WTC11 (cell line): ENCODE measurements at regions of chr17 and their contacts with region 1.

Region 1: DNA sequence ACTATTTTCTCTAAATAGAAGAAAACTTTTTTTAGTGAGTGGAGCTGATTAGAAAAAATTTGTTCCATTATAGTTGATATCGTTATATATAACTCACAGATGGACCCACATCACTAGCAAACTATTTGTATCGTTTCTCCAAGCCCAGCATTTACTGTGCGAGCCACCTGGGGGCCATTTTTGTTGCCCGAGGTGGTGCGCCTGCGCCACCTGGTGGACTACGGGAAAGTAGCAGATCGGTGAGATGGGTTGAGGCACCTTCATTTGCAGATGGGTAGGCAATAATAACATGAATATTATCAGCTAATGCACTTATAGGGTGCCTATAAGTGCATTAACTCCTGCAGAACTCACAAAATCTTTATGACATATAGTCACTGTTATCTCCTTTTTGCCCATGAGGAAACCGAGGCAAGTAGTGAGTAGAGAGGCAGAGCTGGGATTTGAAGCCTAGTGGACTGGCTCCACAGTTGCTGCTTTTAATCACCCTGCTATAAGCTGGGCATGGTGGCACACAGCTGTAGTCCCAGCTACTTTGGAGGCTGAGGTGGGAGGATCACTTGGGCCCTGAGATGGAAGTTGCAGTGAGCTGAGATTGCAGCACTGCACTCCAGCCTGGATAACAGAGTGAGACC is 23.2 kb upstream of the NTN1 start:
- DNase-seq: peak; percentile 79
- ATAC-seq: peak; percentile 55
- H3K4me3 Mint-ChIP-seq: no peak overlapping the region
- H3K27ac Mint-ChIP-seq: no peak overlapping the region
- H3K4me1 Mint-ChIP-seq: peaks cover 29% of the 10 kb centered on the region
- H3K27me3 Mint-ChIP-seq: peaks cover 36% of the 10 kb centered on the region
- CTCF ChIP-seq: peak; percentile 90

Region 2: GRCh38 chr17:8621585-8621984 is 376.5 kb before region 1 on chr17:
- CTCF ChIA-PET with region 1: no interaction called
- POLR2A ChIA-PET with region 1: no interaction called
- DNase-seq: no peak
- ATAC-seq: no peak
- H3K4me3 Mint-ChIP-seq: no peak overlapping the region
- H3K27ac Mint-ChIP-seq: peak overlapping the region; percentile 78
- H3K4me1 Mint-ChIP-seq: peaks cover 30% of the 10 kb centered on the region
- H3K27me3 Mint-ChIP-seq: no peaks in the 10 kb centered on the region
- CTCF ChIP-seq: no peak

Region 3: DNA sequence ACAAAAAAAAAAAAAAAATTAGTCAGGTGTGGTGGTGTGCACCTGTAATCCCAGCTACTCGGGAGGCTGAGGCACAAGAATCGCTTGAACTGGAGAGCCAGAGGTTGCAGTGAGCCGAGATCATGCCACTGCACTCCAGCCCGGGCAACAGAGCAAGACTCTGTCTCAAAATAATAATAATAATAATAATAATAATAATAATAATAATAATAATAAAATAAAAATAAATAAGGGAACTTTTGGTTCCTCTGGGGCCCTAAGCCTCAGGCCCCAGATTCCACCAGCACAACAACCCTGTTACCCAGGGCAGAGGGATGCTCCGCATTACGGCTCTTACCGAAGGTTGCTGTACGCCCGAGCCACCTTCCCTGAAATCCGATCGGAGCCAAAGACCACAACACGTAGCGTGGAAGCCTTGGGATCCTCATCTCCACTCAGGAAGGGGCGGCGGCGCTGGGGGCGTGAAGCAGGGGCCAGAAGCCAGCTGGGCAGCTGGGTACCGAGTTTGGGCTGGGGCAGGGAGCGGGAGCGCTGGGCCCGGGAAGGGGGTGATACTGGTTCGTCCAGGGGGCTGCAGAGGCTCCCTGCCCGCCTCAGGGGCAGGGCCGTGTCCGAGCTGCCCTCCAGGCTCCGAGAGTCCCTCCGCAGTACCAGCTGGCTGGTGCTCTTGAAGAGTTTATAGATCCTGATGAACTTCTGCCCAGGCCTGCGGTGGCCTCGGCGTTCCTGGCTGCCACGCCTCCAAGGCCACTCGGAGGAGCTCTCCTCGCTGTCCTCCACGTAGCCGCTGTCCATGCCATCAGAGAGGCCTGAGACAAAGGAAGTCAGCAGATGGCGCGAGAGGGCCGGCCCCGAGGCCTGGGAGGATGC is 110.0 kb before region 1 on chr17:
- CTCF ChIA-PET with region 1: interaction called, 28 read pairs
- POLR2A ChIA-PET with region 1: no interaction called
- DNase-seq: peak; percentile 89
- ATAC-seq: peak; percentile 82
- H3K4me3 Mint-ChIP-seq: no peak overlapping the region
- H3K27ac Mint-ChIP-seq: no peak overlapping the region
- H3K4me1 Mint-ChIP-seq: no peaks in the 10 kb centered on the region; the same call in 1 of the 2 replicates
- H3K27me3 Mint-ChIP-seq: no peaks in the 10 kb centered on the region; the same call in 1 of the 2 replicates
- CTCF ChIP-seq: no peak

Region 4: DNA sequence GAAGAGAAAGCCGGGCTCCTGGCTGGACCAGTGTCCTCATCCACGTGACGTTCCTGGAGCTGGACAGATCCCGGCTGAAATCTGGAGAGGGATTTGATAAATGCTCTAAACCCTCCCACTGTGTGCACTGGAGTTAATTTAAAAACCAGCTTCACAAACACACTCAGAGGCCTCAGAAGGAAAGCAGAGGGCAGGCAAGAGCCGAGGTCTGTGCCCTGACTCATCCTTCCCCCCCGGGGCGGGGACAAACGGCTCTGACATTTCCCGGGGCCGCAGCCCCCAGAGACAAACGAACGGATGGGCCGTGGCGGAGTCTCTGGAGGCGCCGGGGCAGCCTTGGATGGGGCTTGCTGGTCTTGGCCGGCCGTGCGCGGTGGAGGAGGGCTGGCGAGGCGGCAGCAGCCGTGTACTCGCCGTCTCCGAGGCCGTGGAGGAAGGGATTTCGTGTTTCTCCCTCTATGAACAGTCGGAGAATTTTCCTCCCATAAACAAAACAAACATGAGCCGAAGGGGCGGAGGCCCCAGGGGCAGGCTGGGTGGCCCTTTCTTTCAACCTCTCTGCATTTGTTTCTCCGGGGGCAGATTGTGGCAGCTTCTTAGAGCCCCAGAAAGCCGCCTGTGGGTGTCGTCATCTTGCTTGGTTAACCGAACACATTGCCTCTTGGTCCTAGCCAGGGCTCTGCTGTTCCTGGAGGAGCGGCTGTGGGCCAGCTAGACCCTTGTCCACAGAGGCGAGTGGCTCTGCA is 117.5 kb after region 1 on chr17:
- CTCF ChIA-PET with region 1: interaction called, 15 read pairs
- POLR2A ChIA-PET with region 1: no interaction called
- DNase-seq: peak; percentile 79
- ATAC-seq: peak; percentile 83
- H3K4me3 Mint-ChIP-seq: peak overlapping the region; percentile 45
- H3K27ac Mint-ChIP-seq: no peak overlapping the region
- H3K4me1 Mint-ChIP-seq: peaks cover 33% of the 10 kb centered on the region
- H3K27me3 Mint-ChIP-seq: peaks cover 19% of the 10 kb centered on the region
- CTCF ChIP-seq: no peak

Region 5: GRCh38 chr17:9181640-9182039 is 183.5 kb after region 1 on chr17:
- CTCF ChIA-PET with region 1: interaction called, 13 read pairs
- POLR2A ChIA-PET with region 1: interaction called, 4 read pairs
- DNase-seq: no peak
- ATAC-seq: no peak
- H3K4me3 Mint-ChIP-seq: no peak overlapping the region
- H3K27ac Mint-ChIP-seq: no peak overlapping the region
- H3K4me1 Mint-ChIP-seq: peaks cover 17% of the 10 kb centered on the region
- H3K27me3 Mint-ChIP-seq: peaks cover 2% of the 10 kb centered on the region; the same call in 1 of the 2 replicates
- CTCF ChIP-seq: no peak